Transverse colon (tissue), 4 donors: ENCODE measurements at regions of chr12 and their contacts with region 1.

Region 1: GRCh38 chr12:122646517-122647217 is 56.5 kb downstream of the HCAR2 start:
- DNase-seq: no peak
- H3K4me3 ChIP-seq: no peak overlapping the region
- H3K27ac ChIP-seq: no peak overlapping the region
- H3K4me1 ChIP-seq: peaks cover 0 to 3% (median 0%) of the 10 kb centered on the region in 4 donors
- H3K27me3 ChIP-seq: no peaks in the 10 kb centered on the region
- CTCF ChIP-seq: no peak
- EP300 ChIP-seq: no peak
- POLR2A ChIP-seq: no peak

Region 2: DNA sequence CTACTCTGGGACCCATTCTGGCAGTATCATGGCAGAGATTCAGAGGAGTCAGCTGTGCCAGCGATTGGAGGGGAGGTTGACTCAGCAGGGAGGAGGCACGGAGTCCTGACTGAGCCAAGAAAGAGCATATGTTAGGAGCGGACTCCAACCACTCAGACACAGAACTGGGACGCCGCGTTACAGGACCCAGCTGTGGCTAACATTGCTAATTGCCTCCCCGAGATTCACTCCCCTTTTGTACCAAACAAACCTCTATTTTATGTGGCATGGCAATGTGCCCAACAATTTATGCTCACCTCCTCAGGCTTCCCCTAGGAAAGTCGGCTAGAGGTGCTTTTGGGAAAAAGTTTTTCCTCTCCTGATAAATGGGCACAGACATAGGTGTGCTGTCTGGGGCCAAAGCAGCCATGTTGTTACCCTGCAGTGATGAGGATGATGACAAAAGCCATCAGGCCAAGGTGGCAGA is 209.0 kb before region 1 on chr12:
- in situ Hi-C with region 1: no loop called
- intact Hi-C with region 1: no loop called
- DNase-seq: peak; percentile 30
- H3K4me3 ChIP-seq: no peak overlapping the region
- H3K27ac ChIP-seq: peak overlapping the region in 3 of 4 donors; percentile 0 to 55 (median 34)
- H3K4me1 ChIP-seq: peaks cover 0 to 4% (median 0%) of the 10 kb centered on the region in 4 donors
- H3K27me3 ChIP-seq: no peaks in the 10 kb centered on the region
- CTCF ChIP-seq: no peak
- EP300 ChIP-seq: no peak
- POLR2A ChIP-seq: no peak

Region 3: GRCh38 chr12:122584177-122584780 is 62.4 kb before region 1 on chr12:
- in situ Hi-C with region 1: no loop called
- intact Hi-C with region 1: no loop called
- DNase-seq: no peak
- H3K4me3 ChIP-seq: no peak overlapping the region
- H3K27ac ChIP-seq: no peak overlapping the region
- H3K4me1 ChIP-seq: no peaks in the 10 kb centered on the region
- H3K27me3 ChIP-seq: no peaks in the 10 kb centered on the region
- CTCF ChIP-seq: no peak
- EP300 ChIP-seq: no peak
- POLR2A ChIP-seq: no peak

Region 4: GRCh38 chr12:122669397-122670070 is 22.9 kb after region 1 on chr12:
- in situ Hi-C with region 1: no loop called
- intact Hi-C with region 1: no loop called
- DNase-seq: no peak
- H3K4me3 ChIP-seq: no peak overlapping the region
- H3K27ac ChIP-seq: no peak overlapping the region
- H3K4me1 ChIP-seq: no peaks in the 10 kb centered on the region
- H3K27me3 ChIP-seq: no peaks in the 10 kb centered on the region
- CTCF ChIP-seq: no peak
- EP300 ChIP-seq: no peak
- POLR2A ChIP-seq: no peak

Region 5: DNA sequence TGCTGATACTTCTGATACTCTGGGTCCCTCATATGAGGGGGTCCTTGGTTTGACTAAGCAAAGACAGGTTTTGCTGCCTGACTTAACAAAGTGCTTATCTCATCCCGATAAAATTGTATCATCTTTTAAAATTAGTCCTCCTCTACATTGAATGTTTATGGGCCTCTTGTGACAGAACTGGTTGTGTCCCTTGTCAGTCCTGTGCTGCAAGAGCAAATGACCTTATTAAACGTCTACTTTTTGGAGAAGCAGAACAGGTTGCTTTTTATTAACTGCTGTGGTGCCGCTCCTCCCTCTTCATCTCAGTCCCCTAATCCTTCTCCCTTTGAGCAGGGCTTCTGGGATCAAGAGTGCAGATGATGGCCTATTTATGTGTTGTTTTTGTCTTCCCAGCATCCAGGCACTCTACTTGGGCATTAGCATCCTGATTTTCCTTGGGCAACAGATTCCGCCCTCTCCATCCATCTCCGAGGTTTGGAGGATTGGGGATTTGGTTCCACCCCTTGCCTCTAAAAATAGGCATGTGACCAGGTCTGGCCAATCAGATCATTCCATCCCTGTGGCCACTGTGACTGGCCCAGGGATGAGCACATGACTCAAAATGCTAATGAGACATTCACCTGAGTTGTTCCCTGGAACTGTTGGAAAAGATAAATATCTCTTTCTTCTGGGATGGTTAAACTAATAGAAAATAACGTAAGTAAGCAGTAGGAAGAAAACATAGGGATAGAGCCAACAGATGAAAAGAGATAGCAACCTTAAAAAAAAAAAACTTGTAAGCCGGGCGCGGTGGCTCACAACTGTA is 103.1 kb after region 1 on chr12:
- in situ Hi-C with region 1: loop called in 1 of 4 experiments (anchors 5 kb)
- intact Hi-C with region 1: no loop called
- DNase-seq: no peak
- H3K4me3 ChIP-seq: no peak overlapping the region
- H3K27ac ChIP-seq: no peak overlapping the region
- H3K4me1 ChIP-seq: peaks cover 9 to 22% (median 12%) of the 10 kb centered on the region in 4 donors
- H3K27me3 ChIP-seq: no peaks in the 10 kb centered on the region
- CTCF ChIP-seq: no peak
- EP300 ChIP-seq: no peak
- POLR2A ChIP-seq: no peak

Region 6: DNA sequence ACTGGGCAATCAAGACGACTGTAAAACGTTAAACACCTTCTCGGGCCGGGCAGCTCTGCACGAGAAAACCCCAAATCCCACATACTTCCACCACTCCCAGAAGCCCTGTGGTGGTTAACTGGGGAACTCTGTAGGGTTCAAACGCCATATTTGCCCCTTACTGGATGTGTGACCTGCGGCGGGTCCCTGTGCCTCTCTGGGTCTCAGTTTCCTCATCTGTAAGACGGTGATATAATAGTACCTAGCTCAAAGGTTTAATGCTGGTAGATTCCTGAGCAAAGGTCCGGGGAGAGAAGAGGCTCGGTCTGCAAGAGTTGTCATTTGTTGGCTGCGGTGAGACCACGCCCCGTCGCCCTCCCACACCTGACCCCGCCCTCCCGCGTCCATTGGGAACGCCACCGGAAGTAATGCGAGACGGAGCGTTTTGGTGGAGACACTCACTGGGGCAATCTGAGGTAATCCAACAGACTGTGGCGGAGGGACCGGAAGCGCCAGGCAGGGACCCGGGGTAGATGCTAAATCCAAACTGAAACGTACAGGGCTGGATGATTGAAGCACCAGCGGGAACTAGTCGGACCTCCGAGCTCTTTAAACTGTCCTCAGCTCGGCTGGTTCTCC is 327.7 kb after region 1 on chr12:
- in situ Hi-C with region 1: loop called in 1 of 4 experiments (anchors 25 kb)
- intact Hi-C with region 1: no loop called
- DNase-seq: peak; percentile 99
- H3K4me3 ChIP-seq: peak overlapping the region; percentile 63 to 94 (median 86)
- H3K27ac ChIP-seq: peak overlapping the region; percentile 97 to 99 (median 98)
- H3K4me1 ChIP-seq: peaks cover 16 to 46% (median 29%) of the 10 kb centered on the region in 4 donors
- H3K27me3 ChIP-seq: no peaks in the 10 kb centered on the region
- CTCF ChIP-seq: no peak
- EP300 ChIP-seq: no peak
- POLR2A ChIP-seq: peak; percentile 58

Region 7: GRCh38 chr12:123286652-123287373 is 640.1 kb after region 1 on chr12:
- in situ Hi-C with region 1: no loop called
- intact Hi-C with region 1: no loop called
- DNase-seq: no peak
- H3K4me3 ChIP-seq: no peak overlapping the region
- H3K27ac ChIP-seq: no peak overlapping the region
- H3K4me1 ChIP-seq: no peaks in the 10 kb centered on the region
- H3K27me3 ChIP-seq: no peaks in the 10 kb centered on the region
- CTCF ChIP-seq: no peak
- EP300 ChIP-seq: no peak
- POLR2A ChIP-seq: no peak